Activated CD8-positive, alpha-beta T cell treated with anti-CD3 and anti-CD28 coated beads, Interleukin-2, amount 10 ng/mL, durations not matched to agents 7 days and 5 days (primary cell): ENCODE measurements at regions of chr1 and their contacts with region 1.

Region 1: GRCh38 chr1:160006312-160006940 is 25.4 kb downstream of the PIGM start:
- DNase-seq: peak; percentile 84
- ATAC-seq: peak; percentile 92
- H3K4me3 Mint-ChIP-seq: no peak overlapping the region
- H3K27ac Mint-ChIP-seq: no peak overlapping the region
- H3K4me1 Mint-ChIP-seq: no peaks in the 10 kb centered on the region
- H3K27me3 Mint-ChIP-seq: peaks cover 21% of the 10 kb centered on the region

Region 2: DNA sequence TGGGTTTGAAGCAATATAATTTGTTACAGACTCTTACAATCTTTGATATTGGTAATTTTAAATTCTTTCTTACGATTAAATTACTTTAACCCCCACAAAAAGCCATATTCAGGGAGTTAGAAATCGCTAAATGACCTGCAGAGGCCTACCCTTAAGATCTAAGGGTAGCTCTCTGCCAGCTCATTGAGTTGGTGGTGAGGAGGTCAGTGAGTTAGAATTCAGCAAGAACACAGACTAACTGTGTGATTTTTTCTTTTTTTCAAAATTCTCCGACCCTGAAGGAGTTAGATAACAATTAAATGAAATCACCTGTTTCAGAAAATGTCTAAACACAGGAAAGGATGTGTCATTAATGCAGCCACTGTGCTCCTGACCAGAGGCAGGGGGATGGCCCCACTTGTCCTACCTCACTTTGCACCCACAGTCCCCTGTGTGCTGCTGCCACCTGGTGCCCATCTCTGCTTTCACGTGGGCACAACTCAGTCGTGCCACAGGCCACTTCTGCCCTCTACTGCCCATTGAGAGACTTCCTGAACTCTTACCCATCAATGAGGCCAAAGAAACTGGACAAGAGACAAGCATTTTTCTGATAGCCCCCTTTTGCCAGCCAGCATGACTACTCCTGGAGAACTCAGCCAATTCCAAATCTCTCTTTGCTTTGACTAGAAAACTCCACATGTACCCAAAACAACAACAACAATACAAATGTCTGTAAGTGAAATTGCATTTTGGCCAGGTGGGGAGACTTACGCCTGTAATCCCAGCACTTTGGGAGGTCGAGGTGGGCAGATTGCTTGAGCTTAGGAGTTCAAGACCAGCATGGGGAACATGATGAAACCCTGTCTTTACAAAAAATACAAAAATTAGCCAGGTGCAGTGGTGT is 114.9 kb before region 1 on chr1:
- CTCF ChIA-PET with region 1: interaction called, 113 read pairs
- POLR2A ChIA-PET with region 1: interaction called, 3 read pairs
- DNase-seq: peak; percentile 84
- ATAC-seq: peak; percentile 98
- H3K4me3 Mint-ChIP-seq: no peak overlapping the region
- H3K27ac Mint-ChIP-seq: no peak overlapping the region
- H3K4me1 Mint-ChIP-seq: peaks cover 21% of the 10 kb centered on the region
- H3K27me3 Mint-ChIP-seq: peaks cover 14% of the 10 kb centered on the region

Region 3: DNA sequence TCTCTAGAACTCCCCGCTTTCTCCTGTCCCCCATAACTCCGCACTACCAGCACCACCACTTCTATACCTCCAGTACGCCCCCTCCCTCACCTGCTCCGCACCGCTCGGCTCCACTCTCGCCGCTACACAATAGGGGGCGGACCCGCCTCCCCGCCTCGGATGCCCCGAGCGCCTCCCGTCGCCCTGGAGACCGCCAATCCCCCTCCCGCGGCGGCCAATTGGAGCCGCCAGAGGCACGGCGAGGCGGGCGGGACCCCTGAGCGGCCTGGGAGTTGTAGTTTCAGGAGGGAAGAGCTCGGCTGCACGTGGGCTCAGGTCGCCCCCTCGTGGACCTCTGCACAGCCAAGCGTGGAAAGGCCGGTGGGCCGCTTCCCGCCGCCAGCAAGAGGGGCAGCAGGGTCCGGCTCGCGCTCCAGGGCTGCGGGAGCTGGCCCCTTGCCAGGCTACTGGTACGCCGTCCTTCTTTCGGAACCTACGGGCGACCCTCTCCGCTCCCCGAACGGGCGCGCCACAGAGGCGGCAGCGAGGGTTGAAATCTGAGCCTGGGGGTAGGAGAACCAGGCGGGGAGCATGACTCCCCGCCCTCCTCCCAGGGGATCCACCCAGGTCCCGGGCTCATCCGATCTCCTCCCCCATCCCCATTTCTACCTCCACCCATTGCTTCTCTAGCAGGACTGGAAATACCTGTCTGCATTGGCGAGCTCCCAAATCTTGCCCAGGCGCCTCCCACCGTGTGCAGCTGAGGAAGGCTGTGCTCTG is 60.8 kb before region 1 on chr1 and contains the start of gene IGSF9:
- CTCF ChIA-PET with region 1: interaction called, 184 read pairs
- POLR2A ChIA-PET with region 1: interaction called, 3 read pairs
- DNase-seq: peak; percentile 78
- ATAC-seq: peak; percentile 93
- H3K4me3 Mint-ChIP-seq: peak within 1 kb of the TSS; percentile 36
- H3K27ac Mint-ChIP-seq: no peak within 1 kb of the TSS
- H3K4me1 Mint-ChIP-seq: peaks cover 9% of the 10 kb centered on the region
- H3K27me3 Mint-ChIP-seq: peaks cover 56% of the 10 kb centered on the region
- total RNA-seq, gene IGSF9: not detected

Region 4: DNA sequence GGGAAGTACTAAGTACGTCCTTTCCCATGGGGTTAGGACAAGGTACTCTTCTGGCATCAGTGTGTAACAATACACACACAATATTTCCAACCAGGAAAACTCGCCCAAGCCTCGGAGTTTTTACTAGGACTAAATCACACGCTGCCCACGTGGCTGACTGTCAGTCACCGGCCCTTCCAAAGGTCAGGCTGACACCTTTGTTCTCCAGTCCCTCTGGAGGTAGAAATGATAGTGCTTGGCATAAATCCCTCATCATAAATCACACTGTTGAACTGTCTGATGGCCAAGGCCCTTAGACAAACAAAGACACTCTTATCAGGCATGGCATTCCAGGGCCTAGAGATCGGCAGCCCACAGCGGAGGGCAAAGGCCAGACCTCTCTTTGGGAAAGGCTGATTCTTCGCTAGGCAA is 35.5 kb before region 1 on chr1:
- CTCF ChIA-PET with region 1: interaction called, 15 read pairs
- POLR2A ChIA-PET with region 1: no interaction called
- DNase-seq: no peak
- ATAC-seq: no peak
- H3K4me3 Mint-ChIP-seq: no peak overlapping the region
- H3K27ac Mint-ChIP-seq: no peak overlapping the region
- H3K4me1 Mint-ChIP-seq: no peaks in the 10 kb centered on the region
- H3K27me3 Mint-ChIP-seq: peaks cover 20% of the 10 kb centered on the region

Region 5: GRCh38 chr1:160018900-160019299 is 12.5 kb after region 1 on chr1:
- CTCF ChIA-PET with region 1: interaction called, 74 read pairs
- POLR2A ChIA-PET with region 1: no interaction called
- DNase-seq: peak; percentile 19
- ATAC-seq: no peak
- H3K4me3 Mint-ChIP-seq: no peak overlapping the region
- H3K27ac Mint-ChIP-seq: no peak overlapping the region
- H3K4me1 Mint-ChIP-seq: peaks cover 5% of the 10 kb centered on the region
- H3K27me3 Mint-ChIP-seq: peaks cover 14% of the 10 kb centered on the region

Region 6: GRCh38 chr1:160046494-160047110 is 40.2 kb after region 1 on chr1:
- CTCF ChIA-PET with region 1: interaction called, 38 read pairs
- POLR2A ChIA-PET with region 1: no interaction called
- DNase-seq: peak; percentile 61
- ATAC-seq: peak; percentile 96
- H3K4me3 Mint-ChIP-seq: peak overlapping the region; percentile 65
- H3K27ac Mint-ChIP-seq: peak overlapping the region; percentile 72
- H3K4me1 Mint-ChIP-seq: peaks cover 12% of the 10 kb centered on the region
- H3K27me3 Mint-ChIP-seq: peaks cover 28% of the 10 kb centered on the region

Region 7: GRCh38 chr1:160098852-160099561 is 92.6 kb after region 1 on chr1:
- CTCF ChIA-PET with region 1: no interaction called
- POLR2A ChIA-PET with region 1: no interaction called
- DNase-seq: peak; percentile 99
- ATAC-seq: peak; percentile 89
- H3K4me3 Mint-ChIP-seq: peak overlapping the region; percentile 73
- H3K27ac Mint-ChIP-seq: peak overlapping the region; percentile 88
- H3K4me1 Mint-ChIP-seq: peaks cover 55% of the 10 kb centered on the region
- H3K27me3 Mint-ChIP-seq: no peaks in the 10 kb centered on the region

Region 8: GRCh38 chr1:160161965-160162705 is 155.7 kb after region 1 on chr1:
- CTCF ChIA-PET with region 1: no interaction called
- POLR2A ChIA-PET with region 1: no interaction called
- DNase-seq: no peak
- ATAC-seq: no peak
- H3K4me3 Mint-ChIP-seq: no peak overlapping the region
- H3K27ac Mint-ChIP-seq: no peak overlapping the region
- H3K4me1 Mint-ChIP-seq: peaks cover 10% of the 10 kb centered on the region
- H3K27me3 Mint-ChIP-seq: peaks cover 37% of the 10 kb centered on the region